ENCODE measurements at regions of chr5 and their contacts with region 1.

Region 1: GRCh38 chr5:180605554-180606214 is 14.4 kb upstream of the SCGB3A1 start:
- DNase-seq: peak; percentile 75
- ATAC-seq: peak; percentile 81
- H3K4me3 ChIP-seq: no peak overlapping the region
- H3K27ac ChIP-seq: no peak overlapping the region
- H3K4me1 ChIP-seq: 0 out of 4 replicates have a peak, but pooled peaks cover 0 to 3% of the 10 kb centered on the region in 2 experiments
- H3K27me3 ChIP-seq: no peaks in the 10 kb centered on the region
- CTCF ChIP-seq: peak; percentile 77 to 91 (median 85)
- POLR2A ChIP-seq: no peak
- RAD21 ChIP-seq: peak; percentile 73

Region 2: GRCh38 chr5:180201051-180201987 is 404.4 kb before region 1 on chr5:
- CTCF ChIA-PET with region 1: interaction called, 6 read pairs
- POLR2A ChIA-PET with region 1: no interaction called
- RAD21 ChIA-PET with region 1: no interaction called
- intact Hi-C with region 1: loop called (anchors 5 kb)
- DNase-seq: peak; percentile 27
- ATAC-seq: peak; percentile 63
- H3K4me3 ChIP-seq: no peak overlapping the region
- H3K27ac ChIP-seq: no peak overlapping the region
- H3K4me1 ChIP-seq: no peaks in the 10 kb centered on the region
- H3K27me3 ChIP-seq: no peaks in the 10 kb centered on the region
- CTCF ChIP-seq: peak; percentile 61 to 69 (median 67); a peak in 5 of 6 replicates
- POLR2A ChIP-seq: no peak
- RAD21 ChIP-seq: peak; percentile 74

Region 3: GRCh38 chr5:180494060-180494509 is 111.6 kb before region 1 on chr5 and contains the start of gene CNOT6:
- CTCF ChIA-PET with region 1: interaction called, 4 read pairs
- POLR2A ChIA-PET with region 1: no interaction called
- RAD21 ChIA-PET with region 1: no interaction called
- intact Hi-C with region 1: loop called (anchors 2 kb)
- DNase-seq: peak; percentile 85
- ATAC-seq: peak; percentile 87
- H3K4me3 ChIP-seq: peak within 1 kb of the TSS; percentile 76 to 79
- H3K27ac ChIP-seq: peak within 1 kb of the TSS; percentile 93
- H3K4me1 ChIP-seq: peaks cover 23 to 45% of the 10 kb centered on the region in 2 experiments
- H3K27me3 ChIP-seq: no peaks in the 10 kb centered on the region
- CTCF ChIP-seq: no peak
- POLR2A ChIP-seq: peak; percentile 56
- RAD21 ChIP-seq: no peak
- total RNA-seq, gene CNOT6: 59.1 TPM

Measured in HCT116 (cell line).